K562 (cell line): ENCODE measurements at regions of chr3 and their contacts with region 1.

Region 1: GRCh38 chr3:118884748-118885206 is 149.9 kb downstream of the IGSF11 start:
- DNase-seq: peak; percentile 19 to 58 (median 28)
- ATAC-seq: peak; percentile 87
- H3K4me3 ChIP-seq: no peak overlapping the region
- H3K27ac ChIP-seq: no peak overlapping the region
- H3K4me1 ChIP-seq: no peaks in the 10 kb centered on the region
- H3K27me3 ChIP-seq: no peaks in the 10 kb centered on the region
- CTCF ChIP-seq: peak; percentile 70 to 87 (median 86)
- EP300 ChIP-seq: no peak
- POLR2A ChIP-seq: no peak
- RAD21 ChIP-seq: peak; percentile 91 to 96

Region 2: DNA sequence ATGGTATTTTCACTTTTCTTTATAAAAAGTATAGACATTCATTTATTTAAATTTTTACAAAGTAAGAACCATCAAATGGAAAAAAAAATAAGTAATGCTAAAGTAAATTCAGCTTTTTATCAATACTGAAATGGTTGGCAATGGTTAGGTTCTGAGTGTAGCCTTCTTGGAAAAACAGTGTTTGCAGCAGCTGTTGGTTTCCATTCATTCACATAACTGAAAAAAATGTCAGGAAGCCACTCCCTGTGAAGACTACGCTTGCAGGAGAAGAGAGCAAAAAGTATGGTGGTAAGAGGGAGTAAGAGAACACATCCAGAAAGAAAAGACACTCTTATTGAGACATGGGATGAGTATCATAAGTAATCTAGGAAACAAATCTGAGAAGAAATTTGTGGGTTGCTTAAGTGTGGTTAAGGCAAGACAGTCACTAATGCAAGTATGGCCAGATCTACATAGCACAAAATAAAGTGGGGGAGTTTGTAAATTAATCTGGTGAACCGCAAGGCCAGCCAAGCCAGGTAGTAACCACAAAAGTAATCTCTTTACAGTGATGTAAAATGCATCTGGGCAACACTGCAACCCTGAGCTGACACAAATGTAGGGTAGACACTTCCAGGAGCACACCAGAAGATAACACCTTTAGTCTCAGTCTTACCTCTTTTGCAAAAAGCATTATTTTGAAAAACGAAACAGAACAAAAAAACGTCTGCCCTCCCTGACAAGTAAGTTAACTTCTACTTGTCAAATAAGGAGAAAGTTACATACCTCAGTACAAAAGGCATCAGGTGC is 16.2 kb after region 1 on chr3:
- CTCF ChIA-PET with region 1: no interaction called
- POLR2A ChIA-PET with region 1: no interaction called
- in situ Hi-C with region 1: no loop called
- intact Hi-C with region 1: no loop called
- DNase-seq: no peak
- ATAC-seq: no peak
- H3K4me3 ChIP-seq: no peak overlapping the region
- H3K27ac ChIP-seq: no peak overlapping the region
- H3K4me1 ChIP-seq: no peaks in the 10 kb centered on the region
- H3K27me3 ChIP-seq: no peaks in the 10 kb centered on the region; a peak in 1 of 5 replicates
- CTCF ChIP-seq: no peak
- EP300 ChIP-seq: no peak
- POLR2A ChIP-seq: no peak
- RAD21 ChIP-seq: no peak

Region 3: GRCh38 chr3:119034256-119035013 is 149.7 kb after region 1 on chr3 and contains the start of gene IGSF11:
- CTCF ChIA-PET with region 1: interaction called, 24 read pairs
- POLR2A ChIA-PET with region 1: no interaction called
- in situ Hi-C with region 1: no loop called
- intact Hi-C with region 1: loop called (anchors 1 kb)
- DNase-seq: peak in 3 of 4 experiments; percentile 6 to 78 (median 73)
- ATAC-seq: peak; percentile 99
- H3K4me3 ChIP-seq: peak within 1 kb of the TSS; percentile 53
- H3K27ac ChIP-seq: no peak within 1 kb of the TSS
- H3K4me1 ChIP-seq: peaks cover 0 to 12% of the 10 kb centered on the region in 2 experiments; a peak in 2 of 5 replicates
- H3K27me3 ChIP-seq: peaks cover 0 to 7% of the 10 kb centered on the region in 2 experiments; a peak in 2 of 5 replicates
- CTCF ChIP-seq: peak; percentile 39 to 74 (median 61); a peak in 4 of 6 replicates
- EP300 ChIP-seq: no peak
- POLR2A ChIP-seq: no peak
- RAD21 ChIP-seq: peak; percentile 75 to 84
- polyA plus RNA-seq, gene IGSF11: 1.3 to 1.4 TPM

Region 4: GRCh38 chr3:119091926-119092670 is 207.3 kb after region 1 on chr3:
- CTCF ChIA-PET with region 1: interaction called, 83 read pairs
- POLR2A ChIA-PET with region 1: no interaction called
- in situ Hi-C with region 1: loop called (anchors 5 kb)
- intact Hi-C with region 1: no loop called
- DNase-seq: no peak
- ATAC-seq: no peak
- H3K4me3 ChIP-seq: no peak overlapping the region
- H3K27ac ChIP-seq: no peak overlapping the region
- H3K4me1 ChIP-seq: no peaks in the 10 kb centered on the region
- H3K27me3 ChIP-seq: no peaks in the 10 kb centered on the region
- CTCF ChIP-seq: no peak
- EP300 ChIP-seq: no peak
- POLR2A ChIP-seq: no peak
- RAD21 ChIP-seq: no peak

Region 5: GRCh38 chr3:119240591-119241434 is 356.0 kb after region 1 on chr3 and contains the start of gene B4GALT4:
- CTCF ChIA-PET with region 1: interaction called, 3 read pairs
- POLR2A ChIA-PET with region 1: no interaction called
- in situ Hi-C with region 1: loop called (anchors 25 kb)
- intact Hi-C with region 1: loop called (anchors 5 kb)
- DNase-seq: peak; percentile 71 to 87 (median 77)
- ATAC-seq: peak; percentile 98
- H3K4me3 ChIP-seq: peak within 1 kb of the TSS; percentile 67
- H3K27ac ChIP-seq: peak within 1 kb of the TSS; percentile 74
- H3K4me1 ChIP-seq: peaks cover 8 to 13% of the 10 kb centered on the region in 2 experiments; a peak in 4 of 5 replicates
- H3K27me3 ChIP-seq: no peaks in the 10 kb centered on the region
- CTCF ChIP-seq: no peak
- EP300 ChIP-seq: no peak
- POLR2A ChIP-seq: peak; percentile 78
- RAD21 ChIP-seq: no peak
- polyA plus RNA-seq, gene B4GALT4: 14.9 to 17.8 TPM

Region 6: GRCh38 chr3:119380697-119381096 is 495.9 kb after region 1 on chr3:
- CTCF ChIA-PET with region 1: no interaction called
- POLR2A ChIA-PET with region 1: no interaction called
- in situ Hi-C with region 1: loop called (anchors 10 kb)
- intact Hi-C with region 1: no loop called
- DNase-seq: peak in 1 of 4 experiments; percentile 29
- ATAC-seq: peak; percentile 69
- H3K4me3 ChIP-seq: no peak overlapping the region
- H3K27ac ChIP-seq: no peak overlapping the region
- H3K4me1 ChIP-seq: no peaks in the 10 kb centered on the region
- H3K27me3 ChIP-seq: peaks cover 0 to 9% of the 10 kb centered on the region in 2 experiments; a peak in 2 of 5 replicates
- CTCF ChIP-seq: peak; percentile 9 to 27 (median 18); a peak in 2 of 6 replicates
- EP300 ChIP-seq: no peak
- POLR2A ChIP-seq: no peak
- RAD21 ChIP-seq: peak in 1 of 2 experiments; percentile 39; a peak in 2 of 4 replicates